SK-N-SH (cell line): ENCODE measurements at regions of chr2 and their contacts with region 1.

Region 1: GRCh38 chr2:72734428-72734827 is 91.4 kb downstream of the EXOC6B start:
- DNase-seq: no peak
- H3K4me3 ChIP-seq: no peak overlapping the region
- H3K27ac ChIP-seq: no peak overlapping the region
- H3K4me1 ChIP-seq: no peaks in the 10 kb centered on the region
- H3K27me3 ChIP-seq: no peaks in the 10 kb centered on the region
- CTCF ChIP-seq: no peak
- EP300 ChIP-seq: no peak
- RAD21 ChIP-seq: no peak

Region 2: DNA sequence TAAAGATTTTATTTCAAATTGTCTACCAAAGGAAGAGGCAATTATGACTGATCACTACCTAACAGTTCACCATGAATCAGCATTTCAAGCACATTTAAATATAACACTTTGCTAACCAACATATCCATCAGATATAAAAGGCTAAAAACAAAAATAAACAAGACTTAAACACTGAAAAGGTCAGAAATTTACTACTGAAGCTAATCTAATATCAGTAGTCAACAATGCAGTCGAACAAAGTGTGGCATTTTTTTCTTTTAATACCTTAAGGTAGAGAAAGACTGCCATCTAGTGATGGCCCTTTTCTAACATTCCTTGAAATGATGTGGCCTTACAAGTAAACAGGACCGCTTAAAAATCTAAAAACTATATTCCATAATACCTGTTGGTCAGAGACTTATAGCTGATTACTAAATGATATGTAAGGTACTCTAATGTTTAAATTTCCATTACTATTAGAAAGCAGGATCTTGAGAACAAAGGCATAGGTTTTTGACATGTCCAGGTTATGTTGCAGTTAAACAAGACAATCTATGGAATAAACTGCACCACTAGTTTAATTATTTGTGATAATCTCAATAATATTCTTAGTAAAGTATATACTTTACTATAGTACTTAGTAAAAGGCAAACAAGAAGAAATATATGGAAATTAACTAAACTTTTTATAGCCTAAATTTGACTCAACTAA is 11.4 kb after region 1 on chr2:
- CTCF ChIA-PET with region 1: interaction called, 17 read pairs
- POLR2A ChIA-PET with region 1: no interaction called
- DNase-seq: peak; percentile 21
- H3K4me3 ChIP-seq: no peak overlapping the region
- H3K27ac ChIP-seq: no peak overlapping the region
- H3K4me1 ChIP-seq: peaks cover 0 to 12% of the 10 kb centered on the region in 2 experiments; a peak in 1 of 4 replicates
- H3K27me3 ChIP-seq: no peaks in the 10 kb centered on the region
- CTCF ChIP-seq: peak; percentile 85
- EP300 ChIP-seq: no peak
- RAD21 ChIP-seq: peak; percentile 86